ENCODE measurements at regions of chr3 and their contacts with region 1.

Region 1: DNA sequence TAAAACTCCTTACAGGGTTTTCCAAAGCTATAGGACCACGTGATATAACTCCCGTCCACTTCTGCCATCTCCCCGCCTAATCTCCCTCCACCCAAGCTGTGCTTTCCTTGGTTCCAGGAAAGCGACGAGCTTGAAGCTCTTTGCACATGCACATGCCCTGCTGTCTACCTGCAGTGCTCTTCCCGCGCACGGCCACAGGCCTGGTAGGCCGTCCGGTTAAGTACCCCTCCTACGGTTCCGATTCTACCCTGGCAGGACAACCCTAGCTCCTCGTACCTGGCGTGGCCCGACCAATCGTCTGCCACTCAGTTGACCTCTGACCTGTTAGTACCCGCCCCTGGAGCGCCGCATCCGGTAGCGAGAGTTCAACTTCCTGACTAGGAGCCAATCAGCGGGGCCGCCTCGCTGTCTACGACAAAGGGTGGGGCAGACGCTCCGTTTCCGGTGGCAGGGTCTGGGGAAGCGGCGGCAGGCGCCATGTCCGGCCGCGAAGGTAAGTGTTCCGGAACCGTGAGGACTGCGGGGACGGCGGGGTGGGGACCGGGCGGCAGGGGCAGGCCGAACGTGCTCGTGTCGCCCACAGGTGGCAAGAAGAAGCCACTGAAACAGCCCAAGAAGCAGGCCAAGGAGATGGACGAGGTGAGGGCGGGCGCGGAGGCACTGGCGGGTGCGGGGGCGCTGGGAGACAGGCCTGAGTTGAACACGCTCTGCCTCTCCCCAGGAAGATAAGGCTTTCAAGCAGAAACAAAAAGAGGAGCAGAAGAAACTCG is at the starts of genes CCDC51 and TMA7:
- DNase-seq: peak; percentile 95 to 97
- ATAC-seq: peak; percentile 93 to 97
- H3K4me3 ChIP-seq: peak within 1 kb of the TSS; percentile 59
- H3K27ac ChIP-seq: peak within 1 kb of the TSS; percentile 86 to 96
- H3K4me1 ChIP-seq: peaks cover 16% of the 10 kb centered on the region
- CTCF ChIP-seq: no peak
- EP300 ChIP-seq: no peak
- POLR2A ChIP-seq: peak; percentile 52
- RAD21 ChIP-seq: no peak
- polyA plus RNA-seq, gene CCDC51: 19.8 and 22.9 TPM in 2 replicates
- polyA plus RNA-seq, gene TMA7: 139 and 303 TPM in 2 replicates

Region 2: DNA sequence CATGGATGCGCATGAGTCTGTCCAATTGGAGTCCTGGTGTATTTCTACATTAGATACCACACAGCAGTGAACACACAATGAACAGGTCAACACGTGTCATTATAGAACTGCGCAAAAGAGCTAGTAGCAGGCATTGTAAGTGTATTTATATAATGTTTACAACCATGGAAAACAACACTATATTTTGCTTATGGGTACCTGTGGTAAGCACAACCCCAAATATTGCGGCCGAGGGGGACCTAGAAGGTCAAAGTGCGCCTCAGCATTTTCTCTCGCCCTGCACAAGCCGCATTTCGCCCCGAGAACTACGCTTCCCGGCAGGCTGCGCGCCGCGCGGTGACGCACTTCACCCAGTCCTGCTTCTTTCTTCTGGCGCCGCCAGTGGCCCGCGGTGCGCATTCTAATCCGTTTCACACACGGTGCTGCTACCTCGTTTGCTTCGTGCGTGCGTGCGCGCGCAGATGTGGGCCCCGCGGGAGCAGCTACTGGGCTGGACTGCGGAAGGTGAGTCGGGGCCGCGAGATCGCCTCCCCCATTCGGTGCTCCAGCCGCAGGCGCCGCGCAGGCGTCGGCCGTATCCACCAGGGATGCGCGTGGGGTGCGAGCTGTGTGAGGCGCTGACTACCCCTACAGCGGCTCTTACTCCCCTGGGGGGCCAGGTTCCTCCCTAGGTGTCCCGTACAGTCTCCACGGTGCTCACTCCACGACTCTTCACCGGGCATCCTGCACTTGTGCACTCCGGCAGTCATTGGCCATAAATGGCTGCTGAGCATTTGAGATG is 199.1 kb before region 1 on chr3 and contains the start of gene ZNF589:
- CTCF ChIA-PET with region 1: interaction called, 13 read pairs
- POLR2A ChIA-PET with region 1: interaction called, 5 read pairs
- DNase-seq: peak; percentile 90 to 94
- ATAC-seq: peak; percentile 99 to 100
- H3K4me3 ChIP-seq: peak within 1 kb of the TSS; percentile 75
- H3K27ac ChIP-seq: peak within 1 kb of the TSS; percentile 90 to 95
- H3K4me1 ChIP-seq: peaks cover 6% of the 10 kb centered on the region; the same call in 1 of the 3 replicates
- CTCF ChIP-seq: no peak
- EP300 ChIP-seq: no peak
- POLR2A ChIP-seq: peak; percentile 90
- RAD21 ChIP-seq: no peak
- polyA plus RNA-seq, gene ZNF589: 3.6 and 5.6 TPM in 2 replicates

Region 3: DNA sequence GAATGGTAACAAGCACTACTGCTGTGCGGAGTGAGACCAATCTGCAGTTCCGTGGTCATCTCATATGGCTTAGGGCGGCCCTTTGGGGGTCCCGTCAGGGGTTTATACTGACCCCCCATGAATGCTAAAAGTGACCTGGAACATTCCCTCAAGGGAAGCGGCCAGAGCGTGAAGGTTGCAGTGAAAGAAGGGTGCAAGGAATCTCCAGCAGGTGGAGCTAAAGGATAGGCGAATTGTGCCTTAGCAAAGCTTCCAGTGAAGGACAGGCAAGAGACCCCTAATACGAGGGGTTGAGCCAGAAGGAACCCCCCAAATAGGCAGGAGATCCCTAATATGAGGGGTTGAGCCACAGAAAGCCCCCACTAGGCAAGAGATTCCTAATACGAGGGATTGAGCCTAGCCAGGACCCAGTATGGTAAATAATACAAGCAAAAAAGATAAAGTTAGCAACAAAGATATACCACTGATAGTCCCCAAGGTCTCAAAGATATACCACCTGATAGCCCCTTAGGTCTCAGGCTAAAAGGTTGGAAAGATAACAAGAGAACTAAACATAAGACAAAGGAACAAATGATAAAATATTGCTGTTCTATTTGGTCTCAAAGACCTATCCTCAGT is 166.3 kb before region 1 on chr3:
- CTCF ChIA-PET with region 1: interaction called, 270 read pairs
- POLR2A ChIA-PET with region 1: interaction called, 4 read pairs
- DNase-seq: peak; percentile 54 to 58
- ATAC-seq: peak; percentile 87 to 91
- H3K4me3 ChIP-seq: no peak overlapping the region
- H3K27ac ChIP-seq: no peak overlapping the region
- H3K4me1 ChIP-seq: no peaks in the 10 kb centered on the region
- CTCF ChIP-seq: peak; percentile 78
- EP300 ChIP-seq: no peak
- POLR2A ChIP-seq: no peak
- RAD21 ChIP-seq: peak; percentile 80 to 88

Region 4: DNA sequence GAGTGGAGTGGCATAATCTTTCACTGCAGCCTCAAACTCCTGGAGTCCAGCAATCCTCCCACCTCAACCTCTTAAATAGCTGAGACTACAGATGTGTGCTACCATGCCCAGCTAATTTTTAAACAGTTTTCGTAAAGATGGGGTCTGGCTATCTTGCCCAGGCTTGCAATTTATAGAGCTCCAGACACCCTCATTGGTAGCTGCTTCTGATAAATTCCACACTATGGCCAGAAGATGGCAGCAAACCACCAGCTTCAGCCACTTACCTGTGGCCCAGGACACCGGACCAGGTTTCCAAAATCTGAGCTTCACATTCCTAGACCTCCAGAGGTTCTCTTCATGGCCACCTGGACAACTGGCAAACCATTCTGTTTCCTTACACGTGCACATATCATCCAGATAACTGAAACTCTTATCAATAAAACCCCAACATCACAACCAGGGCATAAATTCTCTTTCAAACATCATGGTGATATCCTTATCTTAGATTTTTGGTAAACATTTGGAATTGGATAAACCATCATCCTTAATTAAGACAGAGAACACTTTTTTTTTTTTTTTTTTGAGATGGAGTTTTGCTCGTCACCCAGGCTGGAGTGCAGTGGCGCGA is 39.1 kb before region 1 on chr3:
- CTCF ChIA-PET with region 1: interaction called, 488 read pairs
- POLR2A ChIA-PET with region 1: interaction called, 5 read pairs
- DNase-seq: peak; percentile 67 to 70
- ATAC-seq: peak; percentile 67 to 84; a peak in 5 of 6 replicates
- H3K4me3 ChIP-seq: no peak overlapping the region
- H3K27ac ChIP-seq: no peak overlapping the region
- H3K4me1 ChIP-seq: peaks cover 10% of the 10 kb centered on the region
- CTCF ChIP-seq: peak; percentile 73
- EP300 ChIP-seq: no peak
- POLR2A ChIP-seq: no peak
- RAD21 ChIP-seq: peak; percentile 80 to 83

Region 5: GRCh38 chr3:48548729-48549705 is 109.0 kb after region 1 on chr3:
- CTCF ChIA-PET with region 1: interaction called, 13 read pairs
- POLR2A ChIA-PET with region 1: interaction called, 3 read pairs
- DNase-seq: peak in 1 of 2 experiments; percentile 69
- ATAC-seq: peak; percentile 45 to 90
- H3K4me3 ChIP-seq: no peak overlapping the region
- H3K27ac ChIP-seq: 0 out of 6 replicates have a peak overlapping the region, but pooled peaks of 1 of the 2 experiments have one; percentile 48
- H3K4me1 ChIP-seq: no peaks in the 10 kb centered on the region
- CTCF ChIP-seq: peak; percentile 74
- EP300 ChIP-seq: no peak
- POLR2A ChIP-seq: no peak
- RAD21 ChIP-seq: peak; percentile 76 to 87

Measured in A549 (cell line).